Activated B cell treated with CpG ODN at 0.5 μM for 24 hours (primary cell): ENCODE measurements at regions of chr20 and their contacts with region 1.

Region 1: DNA sequence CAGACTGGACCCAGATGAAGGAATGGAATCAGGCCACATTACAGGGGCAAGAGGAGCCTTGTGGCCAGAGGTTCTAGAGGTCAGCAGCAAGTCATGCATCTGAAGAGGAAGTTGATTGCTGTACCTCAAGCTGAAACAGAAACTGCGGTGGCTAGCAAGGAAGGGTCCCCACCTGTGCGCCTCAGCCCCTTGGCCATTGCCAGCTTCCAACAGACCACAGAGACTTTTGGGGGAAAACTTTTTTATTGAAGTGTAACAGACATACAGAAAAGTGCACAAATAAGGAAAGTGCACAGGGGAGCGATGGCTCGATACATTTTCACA is 26.8 kb upstream of the SLC9A8 start:
- DNase-seq: peak; percentile 35
- ATAC-seq: peak; percentile 77
- H3K4me3 Mint-ChIP-seq: peak overlapping the region; percentile 78
- H3K27ac Mint-ChIP-seq: peak overlapping the region; percentile 95
- H3K4me1 Mint-ChIP-seq: peaks cover 61% of the 10 kb centered on the region
- H3K27me3 Mint-ChIP-seq: no peaks in the 10 kb centered on the region
- CTCF ChIP-seq: no peak

Region 2: GRCh38 chr20:49747707-49748524 is 37.9 kb before region 1 on chr20:
- CTCF ChIA-PET with region 1: no interaction called
- POLR2A ChIA-PET with region 1: no interaction called
- intact Hi-C with region 1: loop called (anchors 5 kb)
- DNase-seq: no peak
- ATAC-seq: no peak
- H3K4me3 Mint-ChIP-seq: no peak overlapping the region
- H3K27ac Mint-ChIP-seq: no peak overlapping the region
- H3K4me1 Mint-ChIP-seq: peaks cover 16% of the 10 kb centered on the region
- H3K27me3 Mint-ChIP-seq: no peaks in the 10 kb centered on the region
- CTCF ChIP-seq: no peak

Region 3: GRCh38 chr20:49799698-49800097 is 13.9 kb after region 1 on chr20:
- CTCF ChIA-PET with region 1: interaction called, 3 read pairs
- POLR2A ChIA-PET with region 1: interaction called, 51 read pairs
- intact Hi-C with region 1: loop called (anchors 1 kb)
- DNase-seq: no peak
- ATAC-seq: no peak
- H3K4me3 Mint-ChIP-seq: no peak overlapping the region
- H3K27ac Mint-ChIP-seq: no peak overlapping the region
- H3K4me1 Mint-ChIP-seq: peaks cover 68% of the 10 kb centered on the region
- H3K27me3 Mint-ChIP-seq: no peaks in the 10 kb centered on the region
- CTCF ChIP-seq: no peak

Region 4: DNA sequence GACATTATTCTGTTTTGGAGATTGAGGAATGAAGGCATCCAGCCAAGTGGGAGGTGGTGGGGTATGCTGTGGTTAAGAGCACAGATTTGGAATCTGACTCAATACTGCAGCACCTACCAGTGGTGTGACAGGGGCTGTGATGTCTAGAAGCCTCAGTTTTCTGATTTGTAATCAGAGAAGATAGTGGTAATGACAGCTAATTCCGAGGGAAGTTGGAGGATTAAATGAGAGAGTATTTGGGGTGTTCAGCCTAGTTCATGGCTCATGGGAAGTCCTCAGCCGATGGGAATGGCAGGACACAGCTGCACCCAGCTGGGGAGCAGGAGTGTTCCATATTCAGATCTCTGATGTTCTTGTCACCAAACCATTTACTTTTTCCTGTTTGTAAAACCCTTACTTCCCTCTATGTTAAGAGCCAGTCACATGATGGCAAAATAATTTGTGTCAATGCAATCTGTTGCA is 36.1 kb after region 1 on chr20:
- CTCF ChIA-PET with region 1: interaction called, 3 read pairs
- POLR2A ChIA-PET with region 1: interaction called, 12 read pairs
- intact Hi-C with region 1: no loop called
- DNase-seq: no peak
- ATAC-seq: no peak
- H3K4me3 Mint-ChIP-seq: peak overlapping the region; percentile 24
- H3K27ac Mint-ChIP-seq: peak overlapping the region; percentile 76
- H3K4me1 Mint-ChIP-seq: peaks cover 48% of the 10 kb centered on the region
- H3K27me3 Mint-ChIP-seq: no peaks in the 10 kb centered on the region
- CTCF ChIP-seq: no peak

Region 5: DNA sequence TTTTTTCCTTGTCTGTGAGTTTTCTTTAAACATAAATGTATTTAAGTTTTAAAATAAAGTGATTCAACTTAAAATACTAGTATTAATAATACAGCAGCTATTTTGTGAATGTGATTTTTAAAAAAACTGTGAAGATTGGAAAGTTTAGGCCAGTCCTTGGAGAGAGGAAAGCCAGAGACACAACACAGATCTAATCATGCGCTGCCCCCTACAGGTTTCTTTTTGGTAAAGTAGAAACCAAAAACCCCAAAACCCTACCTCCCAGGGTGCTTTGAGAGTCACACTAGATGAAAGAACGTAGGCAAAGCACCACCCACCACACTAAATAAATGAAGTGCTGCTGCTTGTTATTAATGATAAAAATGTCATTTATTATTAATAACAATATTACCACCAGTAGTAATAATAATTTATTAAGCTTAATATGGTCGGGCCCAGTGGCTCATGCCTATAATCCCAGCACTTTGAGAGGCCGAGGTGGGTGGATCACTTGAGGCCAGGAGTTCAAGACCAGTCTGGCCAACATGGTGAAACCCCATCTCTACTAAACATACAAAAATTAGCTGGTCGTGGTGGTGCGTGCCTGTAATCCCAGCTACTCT is 60.5 kb after region 1 on chr20:
- CTCF ChIA-PET with region 1: no interaction called
- POLR2A ChIA-PET with region 1: no interaction called
- intact Hi-C with region 1: no loop called
- DNase-seq: no peak
- ATAC-seq: peak; percentile 82
- H3K4me3 Mint-ChIP-seq: no peak overlapping the region
- H3K27ac Mint-ChIP-seq: no peak overlapping the region
- H3K4me1 Mint-ChIP-seq: peaks cover 17% of the 10 kb centered on the region
- H3K27me3 Mint-ChIP-seq: no peaks in the 10 kb centered on the region
- CTCF ChIP-seq: no peak